Posterior vena cava (tissue), 2 donors: ENCODE measurements at regions of chr11 and their contacts with region 1.

Region 1: GRCh38 chr11:119684361-119685110 is 44.5 kb downstream of the NECTIN1 start:
- DNase-seq: no peak

Region 2: DNA sequence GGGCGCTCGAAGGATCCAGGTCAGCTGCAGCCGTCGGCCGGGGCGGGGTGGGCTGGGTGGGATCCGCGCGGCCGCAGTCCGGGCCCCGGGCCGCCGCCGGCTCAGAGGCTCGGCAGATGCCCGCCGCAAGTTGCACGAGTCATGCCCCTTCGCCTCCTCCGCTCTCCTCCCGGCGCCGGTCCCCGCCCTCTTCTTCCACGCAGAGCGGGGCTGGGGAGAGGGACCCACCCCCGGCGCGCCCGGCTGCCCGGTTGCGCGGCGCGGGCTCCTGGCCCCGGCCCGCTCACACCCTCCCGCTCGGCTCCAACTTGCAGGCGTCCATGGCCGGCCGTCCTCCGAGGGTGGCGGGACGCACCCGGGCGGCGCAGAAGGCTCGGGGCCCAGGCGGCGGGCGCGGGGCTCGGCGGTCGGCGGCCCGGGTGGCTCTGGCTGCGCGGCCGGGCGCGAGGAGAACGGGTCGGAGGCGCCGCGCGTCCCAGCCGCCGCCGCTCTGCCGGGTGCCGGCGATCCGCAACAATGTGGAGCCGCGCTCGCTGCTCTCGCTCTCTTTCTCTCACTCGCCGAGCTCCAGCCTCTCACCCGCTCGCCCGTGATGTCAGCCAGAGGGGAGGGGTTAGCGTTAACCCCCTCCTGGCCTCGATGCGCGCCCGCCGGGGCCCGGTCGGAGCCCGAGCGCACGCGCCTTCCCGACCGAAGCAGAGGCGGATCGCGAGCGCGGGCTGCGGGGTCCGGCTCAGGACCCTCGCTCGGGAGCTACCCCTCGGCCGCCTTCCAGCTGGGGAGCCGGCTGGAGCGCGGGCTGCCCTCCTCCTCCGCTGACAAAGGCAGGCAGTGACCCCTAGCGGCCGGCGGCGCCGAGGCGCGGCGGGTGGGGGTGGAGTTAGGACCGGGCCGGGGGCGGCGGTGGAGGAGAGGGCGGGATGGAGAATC is 44.4 kb after region 1 on chr11 and contains the start of gene NECTIN1:
- intact Hi-C with region 1: loop called in 1 of 2 experiments (anchors 5 kb)
- DNase-seq: peak; percentile 97
- total RNA-seq, gene NECTIN1: 10.6 to 11.4 TPM